A673 (cell line): ENCODE measurements at regions of chrX and their contacts with region 1.

Region 1: GRCh38 chrX:120457766-120458180 is 11.3 kb downstream of the LAMP2 start:
- DNase-seq: peak; percentile 35
- H3K4me3 ChIP-seq: no peak overlapping the region
- H3K27ac ChIP-seq: no peak overlapping the region
- H3K4me1 ChIP-seq: no peaks in the 10 kb centered on the region
- H3K27me3 ChIP-seq: no peaks in the 10 kb centered on the region
- CTCF ChIP-seq: no peak

Region 2: GRCh38 chrX:120213436-120214265 is 244.1 kb before region 1 on chrX:
- CTCF ChIA-PET with region 1: no interaction called
- POLR2A ChIA-PET with region 1: no interaction called
- intact Hi-C with region 1: loop called (anchors 10 kb)
- DNase-seq: peak; percentile 76
- H3K4me3 ChIP-seq: no peak overlapping the region
- H3K27ac ChIP-seq: no peak overlapping the region
- H3K4me1 ChIP-seq: no peaks in the 10 kb centered on the region
- H3K27me3 ChIP-seq: peaks cover 13% of the 10 kb centered on the region
- CTCF ChIP-seq: peak; percentile 88

Region 3: DNA sequence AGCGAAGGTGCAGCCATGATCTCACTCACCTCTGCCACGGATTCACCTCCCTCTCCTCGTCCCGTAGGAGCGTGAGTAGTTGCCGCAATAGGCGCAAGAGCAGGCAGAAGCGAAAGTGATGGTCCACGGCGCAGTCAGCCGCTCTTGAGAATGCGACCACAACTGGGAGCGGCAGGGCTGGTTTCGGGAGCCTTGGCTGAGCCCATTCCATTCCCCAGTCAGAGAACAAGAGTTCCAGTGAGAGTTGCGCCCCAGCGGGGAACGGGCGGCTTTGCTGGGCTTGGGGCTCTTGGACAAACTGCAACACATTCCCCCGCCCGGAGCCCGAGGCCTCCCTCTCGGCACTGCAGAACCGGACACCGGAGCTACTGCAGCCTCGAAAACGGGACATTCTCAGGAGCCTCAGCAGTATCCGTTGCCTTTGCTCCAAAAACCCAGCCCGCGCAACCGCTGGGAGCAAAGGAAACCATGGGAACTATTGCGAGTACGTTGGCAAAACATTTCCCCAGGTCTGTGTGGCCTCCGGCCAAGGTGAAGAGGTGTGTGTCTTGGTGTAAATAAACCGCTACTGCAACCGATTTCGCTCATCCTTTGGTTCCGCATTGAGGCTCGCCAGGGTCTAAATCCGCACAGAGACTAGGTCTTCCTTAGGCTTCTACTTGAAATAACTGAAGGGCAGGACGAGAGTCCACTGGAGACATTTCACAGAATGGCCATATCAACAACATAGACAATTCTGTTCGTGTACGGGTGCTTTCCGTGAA is 212.9 kb before region 1 on chrX:
- CTCF ChIA-PET with region 1: no interaction called
- POLR2A ChIA-PET with region 1: no interaction called
- intact Hi-C with region 1: loop called (anchors 10 kb)
- DNase-seq: peak; percentile 57
- H3K4me3 ChIP-seq: peak overlapping the region; percentile 50
- H3K27ac ChIP-seq: no peak overlapping the region
- H3K4me1 ChIP-seq: no peaks in the 10 kb centered on the region
- H3K27me3 ChIP-seq: peaks cover 25% of the 10 kb centered on the region
- CTCF ChIP-seq: no peak

Region 4: DNA sequence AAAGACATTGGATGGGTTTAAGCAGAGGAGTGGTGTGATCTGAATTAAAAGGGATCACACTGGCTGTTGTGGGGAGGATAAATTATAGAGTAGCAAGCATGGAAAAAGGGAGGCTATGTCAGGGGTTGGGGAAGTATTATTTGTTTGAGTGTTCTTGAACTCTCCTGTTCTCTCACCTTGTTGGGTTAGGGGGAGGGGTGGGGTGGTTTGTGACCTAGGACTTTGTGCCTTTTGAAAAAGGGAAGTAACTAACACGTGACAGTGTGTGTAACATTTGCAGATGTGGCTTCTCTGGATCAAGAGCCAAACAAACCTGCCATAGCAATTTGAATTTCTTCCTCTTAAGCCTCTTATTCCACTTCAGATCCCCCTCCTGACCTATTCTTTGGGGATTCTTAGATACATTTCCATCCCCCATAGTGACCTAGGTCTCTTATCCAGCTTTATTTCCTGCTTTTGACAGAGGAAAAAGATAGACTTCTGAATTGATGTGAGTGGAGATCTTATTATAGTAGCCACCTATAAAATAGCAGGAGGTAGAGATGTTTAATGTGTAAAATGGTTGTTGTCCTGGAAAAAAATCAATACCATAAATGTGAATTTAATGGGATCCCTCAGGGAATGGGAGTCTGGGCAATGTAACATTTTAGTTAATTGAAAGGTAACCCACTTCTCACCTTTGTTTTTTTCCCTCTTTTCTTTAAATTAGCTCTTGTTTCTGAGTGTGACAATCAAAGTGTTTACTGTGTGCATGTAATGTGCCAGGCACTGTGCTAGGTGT is 297.5 kb after region 1 on chrX:
- CTCF ChIA-PET with region 1: no interaction called
- POLR2A ChIA-PET with region 1: no interaction called
- intact Hi-C with region 1: no loop called
- DNase-seq: no peak
- H3K4me3 ChIP-seq: no peak overlapping the region
- H3K27ac ChIP-seq: no peak overlapping the region
- H3K4me1 ChIP-seq: no peaks in the 10 kb centered on the region
- H3K27me3 ChIP-seq: peaks cover 3% of the 10 kb centered on the region
- CTCF ChIP-seq: no peak